ENCODE measurements at regions of chr19 and their contacts with region 1.

Region 1: DNA sequence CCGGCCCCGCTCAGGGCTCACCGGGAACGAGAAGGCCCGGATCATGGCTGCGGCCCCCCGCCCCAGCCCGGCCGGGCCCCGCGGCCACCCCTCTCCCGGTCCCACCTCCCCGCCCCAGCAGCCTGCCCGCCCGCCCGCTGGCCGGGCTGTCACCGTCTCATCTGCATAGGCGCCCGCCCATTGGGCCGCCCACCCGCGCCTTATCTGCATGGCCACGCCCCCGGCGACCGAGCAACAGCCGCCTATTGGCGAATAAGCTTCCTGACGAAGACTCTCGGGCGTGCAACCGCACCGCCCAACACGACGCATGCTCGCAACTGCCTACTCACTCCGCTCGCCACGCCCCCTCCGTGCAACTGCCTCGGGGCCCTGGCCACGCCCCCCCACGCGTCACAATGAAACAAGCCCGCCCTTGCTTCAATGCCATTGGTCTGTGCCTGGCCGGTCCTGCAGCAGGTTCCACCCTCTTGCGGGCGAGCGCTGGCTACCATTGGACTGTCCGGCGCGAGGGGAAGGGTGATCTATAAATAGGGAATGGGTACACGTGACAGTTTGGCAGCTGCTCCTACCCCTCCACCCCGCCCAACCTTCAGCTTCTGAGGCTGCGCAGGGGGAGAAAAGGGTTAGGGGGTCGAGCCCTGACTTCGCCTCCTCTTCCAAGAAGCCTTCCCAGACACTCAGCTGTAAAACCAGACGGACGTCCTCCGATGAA is at the start of gene DACT3:
- DNase-seq: peak; percentile 100
- ATAC-seq: peak; percentile 88
- H3K4me3 ChIP-seq: peak within 1 kb of the TSS; percentile 26 to 67 (median 52)
- H3K4me3 Mint-ChIP-seq: peak within 1 kb of the TSS; percentile 85
- H3K27ac ChIP-seq: peak within 1 kb of the TSS; percentile 32 to 54
- H3K27ac Mint-ChIP-seq: peak within 1 kb of the TSS; percentile 85
- H3K4me1 ChIP-seq: peaks cover 28 to 31% of the 10 kb centered on the region in 2 donors
- H3K4me1 Mint-ChIP-seq: peaks cover 23% of the 10 kb centered on the region
- H3K27me3 ChIP-seq: peaks cover 0 to 38% (median 22%) of the 10 kb centered on the region in 4 experiments
- H3K27me3 Mint-ChIP-seq: peaks cover 18% of the 10 kb centered on the region
- CTCF ChIP-seq: no peak
- total RNA-seq, gene DACT3: 0.15 and 0.34 TPM in 2 replicates

Region 2: DNA sequence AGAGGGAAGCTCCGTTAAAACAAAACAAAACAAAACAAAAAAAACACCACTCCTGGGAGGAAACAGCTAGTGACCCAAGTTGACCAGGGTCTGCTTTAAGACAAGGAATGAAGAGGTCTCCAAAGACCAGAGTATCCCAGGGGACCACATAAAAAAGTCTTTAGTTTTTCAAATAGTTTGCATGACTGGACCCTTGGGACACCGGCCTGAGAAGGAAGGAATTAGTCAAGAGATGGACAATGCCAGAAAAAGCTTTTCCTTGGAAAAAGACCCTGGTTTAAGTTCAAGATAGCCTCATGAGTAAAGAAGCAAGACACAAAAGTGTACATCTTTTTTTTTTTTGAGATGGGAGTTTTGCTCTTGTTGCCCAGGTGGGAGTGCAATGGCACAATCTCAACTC is 153.0 kb before region 1 on chr19:
- CTCF ChIA-PET with region 1: no interaction called
- POLR2A ChIA-PET with region 1: no interaction called
- intact Hi-C with region 1: no loop called
- DNase-seq: no peak
- ATAC-seq: no peak
- H3K4me3 ChIP-seq: no peak overlapping the region
- H3K4me3 Mint-ChIP-seq: no peak overlapping the region
- H3K27ac ChIP-seq: no peak overlapping the region
- H3K27ac Mint-ChIP-seq: no peak overlapping the region
- H3K4me1 ChIP-seq: no peaks in the 10 kb centered on the region
- H3K4me1 Mint-ChIP-seq: no peaks in the 10 kb centered on the region
- H3K27me3 ChIP-seq: peaks cover 0 to 6% (median 0%) of the 10 kb centered on the region in 4 experiments
- H3K27me3 Mint-ChIP-seq: peaks cover 32% of the 10 kb centered on the region
- CTCF ChIP-seq: no peak

Region 3: DNA sequence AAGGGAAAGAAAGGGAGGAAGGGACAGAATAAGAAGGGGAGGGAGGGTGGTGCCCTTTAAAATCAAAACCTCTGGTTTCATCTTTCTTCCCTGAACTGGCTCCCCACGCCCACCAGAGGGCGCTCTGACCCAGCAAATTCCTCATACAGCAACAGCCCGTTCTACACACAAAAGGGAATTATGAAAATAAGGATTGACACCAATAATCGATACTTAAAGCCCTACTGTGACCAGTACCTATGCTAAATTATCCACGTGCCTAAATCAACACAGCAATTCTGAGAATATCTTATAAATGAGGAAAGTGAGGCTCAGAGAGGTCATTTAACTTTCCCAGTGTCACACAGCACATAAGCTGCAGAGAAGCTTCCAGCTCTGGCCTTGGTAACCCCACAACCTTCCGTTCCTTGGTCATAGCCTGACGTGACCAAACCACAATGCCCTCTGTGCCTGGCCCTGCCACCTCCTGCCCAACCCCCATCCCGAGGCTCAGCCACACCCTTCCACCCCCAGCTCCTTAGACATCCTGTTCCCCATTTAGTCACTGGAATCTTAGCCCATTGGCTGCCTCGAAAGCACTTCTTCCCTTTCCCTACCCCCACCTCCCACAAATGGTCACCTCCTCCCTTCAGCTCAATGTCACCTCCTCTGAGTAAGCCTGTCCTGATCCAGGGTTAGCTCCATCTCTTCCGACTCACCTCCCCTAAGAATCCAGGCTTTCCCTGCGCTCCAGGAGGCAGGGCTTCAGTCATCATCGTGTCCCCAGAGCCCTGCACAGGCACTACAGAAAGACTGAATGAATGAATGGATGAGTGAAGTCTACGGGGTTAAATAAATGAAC is 131.3 kb before region 1 on chr19:
- CTCF ChIA-PET with region 1: interaction called, 68 read pairs
- POLR2A ChIA-PET with region 1: interaction called, 7 read pairs
- intact Hi-C with region 1: loop called (anchors 1 kb)
- DNase-seq: peak; percentile 81
- ATAC-seq: peak; percentile 67
- H3K4me3 ChIP-seq: no peak overlapping the region
- H3K4me3 Mint-ChIP-seq: no peak overlapping the region
- H3K27ac ChIP-seq: no peak overlapping the region
- H3K27ac Mint-ChIP-seq: no peak overlapping the region
- H3K4me1 ChIP-seq: peaks cover 0 to 10% of the 10 kb centered on the region in 2 donors
- H3K4me1 Mint-ChIP-seq: peaks cover 10% of the 10 kb centered on the region
- H3K27me3 ChIP-seq: peaks cover 0 to 15% (median 3%) of the 10 kb centered on the region in 4 experiments
- H3K27me3 Mint-ChIP-seq: peaks cover 8% of the 10 kb centered on the region
- CTCF ChIP-seq: peak; percentile 98

Region 4: DNA sequence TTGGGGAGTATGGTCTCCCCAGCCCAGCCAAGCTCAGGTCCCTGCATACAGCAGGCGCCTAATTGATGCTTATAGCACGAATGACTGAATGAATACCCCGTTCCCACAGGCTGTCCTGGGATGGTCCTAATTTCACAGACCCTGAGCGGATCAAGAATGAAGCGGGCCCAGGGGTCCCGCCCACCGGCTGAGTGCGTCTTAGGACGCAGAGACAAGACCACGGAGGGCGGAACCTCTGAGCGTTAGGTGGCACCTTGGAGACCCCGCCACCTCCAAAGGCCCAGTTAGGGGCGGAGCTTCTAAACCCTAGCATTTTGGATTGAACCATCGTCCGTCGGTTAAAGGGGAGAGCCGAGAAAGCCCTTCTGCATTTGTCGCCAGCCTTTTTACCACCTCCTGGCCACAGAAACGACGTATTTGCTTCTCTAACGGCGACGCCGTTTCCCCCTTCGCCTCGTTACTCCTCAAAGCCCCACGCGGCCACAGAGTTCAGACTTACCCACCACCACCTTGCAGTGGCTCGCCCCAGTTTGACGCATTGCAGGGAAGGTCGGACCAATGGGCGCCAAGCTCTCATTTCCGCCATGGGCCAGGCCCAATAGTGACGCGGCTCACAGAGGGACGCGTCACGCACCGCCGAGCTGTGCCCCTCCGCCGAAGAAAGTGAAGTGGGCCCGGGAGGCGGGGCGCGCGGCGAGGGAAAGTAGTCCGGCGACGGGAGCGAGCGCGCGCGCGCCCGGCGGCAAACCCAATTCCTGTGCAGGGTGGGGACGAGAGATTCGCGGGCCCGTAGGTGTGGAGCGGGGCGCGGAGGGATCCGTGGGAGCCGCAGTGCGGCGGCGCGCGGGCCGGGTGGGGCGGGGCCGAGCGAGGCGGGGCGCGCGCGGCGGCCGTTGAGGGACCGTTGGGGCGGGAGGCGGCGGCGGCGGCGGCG is 60.5 kb before region 1 on chr19:
- CTCF ChIA-PET with region 1: interaction called, 55 read pairs
- POLR2A ChIA-PET with region 1: interaction called, 20 read pairs
- intact Hi-C with region 1: loop called (anchors 1 kb)
- DNase-seq: peak; percentile 100
- ATAC-seq: peak; percentile 89
- H3K4me3 ChIP-seq: peak overlapping the region; percentile 64 to 100 (median 99)
- H3K4me3 Mint-ChIP-seq: peak overlapping the region; percentile 100
- H3K27ac ChIP-seq: peak overlapping the region; percentile 98 to 100
- H3K27ac Mint-ChIP-seq: peak overlapping the region; percentile 100
- H3K4me1 ChIP-seq: peaks cover 19 to 30% of the 10 kb centered on the region in 2 donors
- H3K4me1 Mint-ChIP-seq: peaks cover 31% of the 10 kb centered on the region
- H3K27me3 ChIP-seq: no peaks in the 10 kb centered on the region
- H3K27me3 Mint-ChIP-seq: no peaks in the 10 kb centered on the region
- CTCF ChIP-seq: no peak

Region 5: GRCh38 chr19:46634045-46634655 is 27.0 kb before region 1 on chr19:
- CTCF ChIA-PET with region 1: interaction called, 47 read pairs
- POLR2A ChIA-PET with region 1: interaction called, 4 read pairs
- intact Hi-C with region 1: loop called (anchors 1 kb)
- DNase-seq: peak; percentile 98
- ATAC-seq: peak; percentile 74
- H3K4me3 ChIP-seq: peak overlapping the region in 4 of 5 experiments; percentile 35 to 57 (median 52)
- H3K4me3 Mint-ChIP-seq: peak overlapping the region; percentile 82
- H3K27ac ChIP-seq: peak overlapping the region; percentile 73 to 79
- H3K27ac Mint-ChIP-seq: peak overlapping the region; percentile 71
- H3K4me1 ChIP-seq: peaks cover 40 to 52% of the 10 kb centered on the region in 2 donors
- H3K4me1 Mint-ChIP-seq: peaks cover 30% of the 10 kb centered on the region
- H3K27me3 ChIP-seq: peaks cover 0 to 10% (median 2%) of the 10 kb centered on the region in 4 experiments
- H3K27me3 Mint-ChIP-seq: peaks cover 7% of the 10 kb centered on the region
- CTCF ChIP-seq: no peak

Region 6: GRCh38 chr19:46717034-46717723 is 56.0 kb after region 1 on chr19 and contains the start of gene PRKD2:
- CTCF ChIA-PET with region 1: interaction called, 7 read pairs
- POLR2A ChIA-PET with region 1: interaction called, 3 read pairs
- intact Hi-C with region 1: loop called (anchors 1 kb)
- DNase-seq: peak; percentile 89
- ATAC-seq: peak; percentile 48
- H3K4me3 ChIP-seq: peak within 1 kb of the TSS; percentile 77 to 99 (median 92)
- H3K4me3 Mint-ChIP-seq: peak within 1 kb of the TSS; percentile 97
- H3K27ac ChIP-seq: peak within 1 kb of the TSS; percentile 89 to 92
- H3K27ac Mint-ChIP-seq: peak within 1 kb of the TSS; percentile 95
- H3K4me1 ChIP-seq: peaks cover 58 to 75% of the 10 kb centered on the region in 2 donors
- H3K4me1 Mint-ChIP-seq: peaks cover 66% of the 10 kb centered on the region
- H3K27me3 ChIP-seq: no peaks in the 10 kb centered on the region
- H3K27me3 Mint-ChIP-seq: no peaks in the 10 kb centered on the region
- CTCF ChIP-seq: no peak
- total RNA-seq, gene PRKD2: 185 and 192 TPM in 2 replicates

Region 7: DNA sequence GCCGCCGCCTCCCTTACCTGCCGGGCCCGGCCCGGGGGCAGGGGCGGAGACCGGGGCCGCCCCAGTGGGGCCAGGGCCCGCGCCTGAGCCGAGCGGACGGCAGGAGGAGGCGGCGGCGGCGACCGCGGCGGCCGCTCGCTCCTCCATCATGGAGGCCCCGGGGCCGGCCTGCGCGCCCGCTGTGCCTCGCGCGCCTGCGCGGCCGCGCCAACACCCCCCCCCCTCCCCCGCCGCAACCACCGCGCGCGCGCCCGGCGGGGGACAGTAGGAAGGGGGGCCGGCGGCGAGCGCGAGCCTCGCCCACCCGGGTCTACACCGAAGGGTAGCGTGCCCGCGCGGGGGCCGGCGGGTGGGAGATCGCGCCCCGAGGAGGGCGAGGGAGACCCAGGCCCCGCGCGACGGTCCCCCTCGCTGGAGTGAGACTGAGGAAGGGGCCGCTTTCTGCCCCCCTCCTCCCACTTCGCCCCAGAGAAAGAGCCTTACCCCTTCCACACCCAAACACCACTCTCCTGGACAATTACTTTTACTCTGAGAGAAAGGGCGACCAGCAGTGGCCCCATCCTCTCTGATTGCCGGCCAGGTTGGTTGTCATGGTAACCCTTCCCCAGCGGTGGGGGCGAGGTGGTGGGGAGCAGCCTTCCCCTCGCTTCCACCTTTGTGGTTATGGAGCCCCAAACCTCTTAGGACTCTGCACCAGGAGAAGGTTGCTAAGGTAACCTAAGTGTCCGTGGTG is 85.3 kb after region 1 on chr19 and contains the start of gene STRN4:
- CTCF ChIA-PET with region 1: interaction called, 6 read pairs
- POLR2A ChIA-PET with region 1: no interaction called
- intact Hi-C with region 1: loop called (anchors 1 kb)
- DNase-seq: peak; percentile 82
- ATAC-seq: peak; percentile 78
- H3K4me3 ChIP-seq: peak within 1 kb of the TSS; percentile 51 to 87 (median 84)
- H3K4me3 Mint-ChIP-seq: peak within 1 kb of the TSS; percentile 93
- H3K27ac ChIP-seq: peak within 1 kb of the TSS; percentile 43 to 77
- H3K27ac Mint-ChIP-seq: peak within 1 kb of the TSS; percentile 85
- H3K4me1 ChIP-seq: peaks cover 15 to 43% of the 10 kb centered on the region in 2 donors
- H3K4me1 Mint-ChIP-seq: peaks cover 58% of the 10 kb centered on the region
- H3K27me3 ChIP-seq: no peaks in the 10 kb centered on the region
- H3K27me3 Mint-ChIP-seq: no peaks in the 10 kb centered on the region
- CTCF ChIP-seq: no peak
- total RNA-seq, gene STRN4: 102 and 112 TPM in 2 replicates

Region 8: GRCh38 chr19:46860125-46860845 is 199.1 kb after region 1 on chr19:
- CTCF ChIA-PET with region 1: no interaction called
- POLR2A ChIA-PET with region 1: no interaction called
- intact Hi-C with region 1: loop called (anchors 1 kb)
- DNase-seq: peak; percentile 97
- ATAC-seq: peak; percentile 81
- H3K4me3 ChIP-seq: peak overlapping the region in 4 of 5 experiments; percentile 68 to 79 (median 77)
- H3K4me3 Mint-ChIP-seq: peak overlapping the region; percentile 91
- H3K27ac ChIP-seq: peak overlapping the region; percentile 71 to 77
- H3K27ac Mint-ChIP-seq: peak overlapping the region; percentile 95
- H3K4me1 ChIP-seq: peaks cover 40 to 41% of the 10 kb centered on the region in 2 donors
- H3K4me1 Mint-ChIP-seq: peaks cover 22% of the 10 kb centered on the region
- H3K27me3 ChIP-seq: no peaks in the 10 kb centered on the region
- H3K27me3 Mint-ChIP-seq: no peaks in the 10 kb centered on the region
- CTCF ChIP-seq: no peak

Measured in B cell (primary cell).